ENCODE measurements at regions of chr20 and their contacts with region 1.

Region 1: DNA sequence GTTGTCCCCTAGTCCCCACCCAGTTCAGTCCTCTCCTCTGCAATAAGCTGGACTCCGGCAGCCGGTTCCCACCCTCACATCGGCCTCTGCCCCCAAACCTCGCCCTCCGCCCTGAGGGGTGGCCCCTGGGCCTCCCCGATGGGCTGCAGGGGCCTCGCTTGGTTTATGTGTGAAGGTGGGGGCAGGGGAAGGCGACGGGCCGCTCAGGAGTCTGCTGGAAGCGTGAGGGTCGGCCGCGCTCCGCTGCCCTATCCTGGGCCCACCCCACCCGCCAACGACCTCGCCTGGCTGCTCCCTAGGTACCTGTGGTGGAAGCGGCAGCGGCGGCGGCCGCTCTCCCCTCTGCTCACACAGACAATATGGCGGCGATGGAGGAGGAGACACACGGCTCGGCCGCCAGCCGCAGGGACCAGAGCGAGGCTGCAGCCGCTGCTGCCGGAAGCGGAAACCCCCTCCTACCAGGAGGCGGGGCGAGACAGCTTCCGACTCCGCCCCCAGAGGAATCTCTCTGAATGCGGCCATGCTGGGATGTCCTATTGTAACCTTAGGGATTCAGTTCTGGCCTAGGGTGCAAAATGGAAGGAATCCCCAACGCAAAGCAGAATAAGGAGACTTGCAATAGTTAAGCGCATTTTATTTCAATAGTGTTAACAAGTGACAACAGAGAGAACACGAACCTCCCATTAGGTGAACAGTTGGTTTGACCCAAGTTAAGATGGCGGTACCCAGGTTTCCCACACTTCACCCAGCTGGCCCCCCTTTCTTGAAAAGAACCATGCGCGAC is at the start of gene CSNK2A1:
- DNase-seq: peak; percentile 93 to 98 (median 96)
- H3K4me3 ChIP-seq: peak within 1 kb of the TSS; percentile 68
- H3K4me3 Mint-ChIP-seq: peak within 1 kb of the TSS; percentile 79 to 100 (median 90)
- H3K27ac ChIP-seq: peak within 1 kb of the TSS; percentile 92
- H3K27ac Mint-ChIP-seq: peak within 1 kb of the TSS; percentile 97 to 100 (median 99)
- H3K4me1 ChIP-seq: peaks cover 48% of the 10 kb centered on the region
- H3K4me1 Mint-ChIP-seq: peaks cover 47 to 59% (median 56%) of the 10 kb centered on the region in 3 donors
- H3K27me3 ChIP-seq: no peaks in the 10 kb centered on the region
- H3K27me3 Mint-ChIP-seq: peaks cover 1 to 4% of the 10 kb centered on the region in 2 donors
- total RNA-seq, gene CSNK2A1: 172 to 173 TPM

Region 2: GRCh38 chr20:371755-372542 is 171.6 kb before region 1 on chr20:
- CTCF ChIA-PET with region 1: no interaction called
- POLR2A ChIA-PET with region 1: interaction called, 10 read pairs
- DNase-seq: peak in 1 of 5 donors; percentile 18
- H3K4me3 ChIP-seq: no peak overlapping the region
- H3K4me3 Mint-ChIP-seq: no peak overlapping the region
- H3K27ac ChIP-seq: peak overlapping the region; percentile 76
- H3K27ac Mint-ChIP-seq: no peak overlapping the region
- H3K4me1 ChIP-seq: peaks cover 21% of the 10 kb centered on the region
- H3K4me1 Mint-ChIP-seq: peaks cover 0 to 2% (median 0%) of the 10 kb centered on the region in 3 donors
- H3K27me3 ChIP-seq: no peaks in the 10 kb centered on the region
- H3K27me3 Mint-ChIP-seq: peaks cover 3% of the 10 kb centered on the region in 2 donors

Region 3: DNA sequence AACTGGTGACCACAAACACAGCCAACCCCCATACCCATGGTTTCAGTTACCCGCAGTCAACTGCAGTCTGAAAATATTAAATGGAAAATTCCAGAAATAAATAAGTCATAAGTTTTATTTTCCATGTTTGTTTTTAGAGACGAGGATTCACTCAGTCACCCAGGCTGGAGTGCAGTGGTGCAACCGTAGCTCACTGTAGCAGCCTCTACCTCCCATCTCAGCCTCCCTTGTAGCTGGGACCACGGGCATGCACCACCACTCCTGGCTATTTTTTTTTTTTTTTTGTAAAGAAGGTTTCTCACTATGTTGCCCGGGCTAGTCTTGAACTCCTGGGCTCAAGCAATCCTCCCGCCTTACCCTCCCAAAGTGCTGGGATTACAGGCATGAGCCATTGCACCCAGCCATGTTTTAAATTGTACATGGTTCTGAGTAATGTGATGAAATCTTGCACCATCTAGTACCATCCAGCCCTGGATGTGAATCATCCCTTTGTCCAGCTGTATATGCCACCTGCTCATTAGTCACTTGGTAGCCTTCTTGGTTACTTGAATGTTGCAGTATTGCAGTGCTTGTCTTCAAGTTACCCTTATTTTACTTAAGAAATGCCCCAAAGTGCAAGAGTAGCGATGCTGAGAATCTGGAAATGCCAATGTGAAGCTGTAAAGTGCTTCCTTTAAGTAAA is 14.5 kb before region 1 on chr20:
- CTCF ChIA-PET with region 1: no interaction called
- POLR2A ChIA-PET with region 1: interaction called, 16 read pairs
- DNase-seq: no peak
- H3K4me3 ChIP-seq: no peak overlapping the region
- H3K4me3 Mint-ChIP-seq: no peak overlapping the region
- H3K27ac ChIP-seq: no peak overlapping the region
- H3K27ac Mint-ChIP-seq: peak overlapping the region in 3 of 8 donors; percentile 7 to 58 (median 57)
- H3K4me1 ChIP-seq: peaks cover 8% of the 10 kb centered on the region
- H3K4me1 Mint-ChIP-seq: peaks cover 35 to 53% (median 49%) of the 10 kb centered on the region in 3 donors
- H3K27me3 ChIP-seq: no peaks in the 10 kb centered on the region
- H3K27me3 Mint-ChIP-seq: no peaks in the 10 kb centered on the region

Region 4: DNA sequence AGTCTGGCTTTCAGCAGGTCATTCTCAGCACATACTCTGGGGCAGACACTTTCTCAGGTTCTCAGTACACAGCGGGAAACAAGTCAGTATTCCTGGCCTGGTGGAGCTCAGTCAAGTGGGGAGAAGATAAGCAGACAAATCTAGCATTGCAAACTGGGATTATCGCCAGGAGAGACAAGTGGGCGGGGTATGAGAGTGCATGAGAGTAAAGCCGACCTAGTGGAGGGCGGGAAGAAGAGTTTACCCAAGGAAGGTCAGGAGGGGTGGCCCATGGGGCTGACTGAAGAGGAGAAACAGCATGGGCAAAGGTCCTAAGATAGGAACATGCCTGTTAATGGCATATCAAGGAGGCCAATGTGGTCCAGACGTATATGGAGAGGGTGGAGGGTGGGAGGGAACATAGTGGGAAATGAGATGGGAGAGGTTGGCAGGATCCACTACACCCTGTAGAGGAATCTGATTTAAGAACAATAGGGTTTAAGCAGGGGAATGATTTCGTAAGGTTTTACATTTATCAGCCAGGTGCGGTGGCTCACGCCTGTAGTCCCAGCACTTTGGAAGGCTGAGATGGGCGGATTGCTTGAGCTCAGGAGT is 12.5 kb after region 1 on chr20:
- CTCF ChIA-PET with region 1: no interaction called
- POLR2A ChIA-PET with region 1: no interaction called
- DNase-seq: no peak
- H3K4me3 ChIP-seq: no peak overlapping the region
- H3K4me3 Mint-ChIP-seq: no peak overlapping the region
- H3K27ac ChIP-seq: no peak overlapping the region
- H3K27ac Mint-ChIP-seq: no peak overlapping the region
- H3K4me1 ChIP-seq: no peaks in the 10 kb centered on the region
- H3K4me1 Mint-ChIP-seq: no peaks in the 10 kb centered on the region
- H3K27me3 ChIP-seq: no peaks in the 10 kb centered on the region
- H3K27me3 Mint-ChIP-seq: peaks cover 27 to 53% of the 10 kb centered on the region in 2 donors

Measured in CD8-positive, alpha-beta memory T cell (primary cell).